Astrocyte of the cerebellum (primary cell): ENCODE measurements at regions of chr12 and their contacts with region 1.

Region 1: GRCh38 chr12:9615420-9616136 is 7.9 kb upstream of the KLRB1 start:
- DNase-seq: no peak
- H3K4me3 ChIP-seq: no peak overlapping the region
- CTCF ChIP-seq: no peak

Region 2: DNA sequence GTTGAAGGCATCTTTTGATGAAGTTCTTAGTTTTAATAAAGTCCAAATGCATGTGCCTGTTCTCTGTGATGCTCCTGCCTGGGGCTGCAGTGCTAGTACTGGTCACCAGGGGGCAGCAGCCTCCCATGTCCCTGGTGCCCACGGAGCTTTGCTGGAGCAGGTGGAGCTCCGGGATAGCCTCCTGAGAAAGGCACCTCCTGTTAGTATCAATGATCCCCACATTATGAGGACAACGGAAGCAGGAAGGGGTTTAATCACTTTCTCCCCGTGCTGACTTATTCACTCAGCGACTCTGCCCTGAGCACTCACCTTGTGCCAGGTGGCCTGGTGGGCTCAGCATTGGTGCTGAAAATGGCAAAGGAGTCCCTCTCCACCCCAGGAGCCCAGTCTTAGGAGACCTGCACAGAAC is 284.4 kb before region 1 on chr12:
- in situ Hi-C with region 1: loop called (anchors 25 kb)
- DNase-seq: peak; percentile 28
- H3K4me3 ChIP-seq: no peak overlapping the region
- CTCF ChIP-seq: peak; percentile 100